IMR-90 (cell line): ENCODE measurements at regions of chr11 and their contacts with region 1.

Region 1: DNA sequence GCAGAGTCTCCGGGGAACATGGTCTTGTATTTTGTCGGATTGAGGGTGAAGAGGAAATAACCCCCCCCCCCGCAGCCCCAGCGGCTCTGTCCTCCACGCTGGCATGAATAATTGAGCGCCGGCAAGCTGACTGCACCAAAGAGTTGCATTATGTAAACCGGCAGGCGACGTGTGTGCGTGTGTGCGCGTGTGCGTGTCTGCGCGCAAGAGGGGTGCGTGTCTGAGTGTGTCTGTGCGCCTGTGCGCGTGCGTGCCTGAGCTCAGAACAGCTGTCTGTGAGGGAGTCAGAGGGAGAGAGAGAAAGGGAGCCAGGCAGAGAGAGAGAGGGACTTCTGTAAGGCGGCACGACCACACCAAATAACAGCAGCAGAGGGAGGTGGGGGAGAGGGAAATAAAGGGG is 94.4 kb downstream of the SCN3B start:
- DNase-seq: peak; percentile 88
- ATAC-seq: peak; percentile 88
- H3K4me3 ChIP-seq: peak overlapping the region; percentile 31
- H3K27ac ChIP-seq: peak overlapping the region; percentile 50
- H3K4me1 ChIP-seq: peaks cover 13% of the 10 kb centered on the region
- H3K27me3 ChIP-seq: no peaks in the 10 kb centered on the region
- CTCF ChIP-seq: no peak
- POLR2A ChIP-seq: no peak
- RAD21 ChIP-seq: no peak

Region 2: DNA sequence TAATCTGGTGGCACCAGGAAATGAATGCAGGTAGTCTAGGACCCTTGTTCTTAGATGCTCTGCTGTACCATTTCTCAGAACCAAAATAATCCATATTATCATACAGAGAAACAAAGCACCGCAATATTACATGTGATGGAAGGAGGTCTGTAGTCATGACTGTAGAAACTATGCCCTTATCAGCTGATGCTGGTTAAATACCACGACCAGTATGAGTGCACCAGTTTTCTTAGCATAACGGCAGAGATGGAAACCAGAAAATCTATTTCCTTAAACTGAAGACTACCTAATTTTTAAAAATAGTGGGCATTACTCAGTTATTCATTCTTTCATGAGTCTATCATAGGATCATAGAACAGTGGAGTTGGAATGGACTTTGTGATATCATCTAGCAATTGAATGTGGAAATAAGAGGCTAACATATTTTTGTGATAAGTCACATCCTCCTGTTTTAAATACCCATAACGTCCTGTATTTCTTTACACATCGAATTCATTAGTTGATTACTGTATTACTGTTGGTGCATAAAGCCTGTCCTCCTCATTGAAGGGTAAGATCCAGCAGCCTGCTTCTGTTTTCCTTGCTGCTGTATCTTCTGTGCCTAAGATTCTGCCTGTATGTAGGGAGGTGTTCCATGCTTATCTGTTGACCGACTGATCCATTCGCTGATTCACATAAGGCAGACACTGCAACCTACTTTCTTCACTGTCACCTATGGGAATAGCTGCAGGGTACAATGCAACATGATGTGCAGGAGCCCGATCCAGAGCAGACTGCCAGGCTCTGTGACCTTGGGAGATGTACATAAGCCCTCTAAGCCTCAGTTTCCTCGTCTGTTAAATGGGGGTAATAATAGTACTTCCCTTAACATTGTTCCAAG is 662.2 kb before region 1 on chr11:
- CTCF ChIA-PET with region 1: no interaction called
- POLR2A ChIA-PET with region 1: interaction called, 13 read pairs
- dilution Hi-C with region 1: no loop called
- in situ Hi-C with region 1: no loop called
- intact Hi-C with region 1: no loop called
- DNase-seq: peak; percentile 68
- ATAC-seq: peak; percentile 37
- H3K4me3 ChIP-seq: no peak overlapping the region
- H3K27ac ChIP-seq: peak overlapping the region; percentile 50; the same call in 1 of the 2 replicates
- H3K4me1 ChIP-seq: peaks cover 3% of the 10 kb centered on the region; the same call in 1 of the 2 replicates
- H3K27me3 ChIP-seq: no peaks in the 10 kb centered on the region
- CTCF ChIP-seq: no peak
- POLR2A ChIP-seq: no peak
- RAD21 ChIP-seq: no peak

Region 3: GRCh38 chr11:123159183-123159857 is 400.7 kb before region 1 on chr11:
- CTCF ChIA-PET with region 1: no interaction called
- POLR2A ChIA-PET with region 1: no interaction called
- dilution Hi-C with region 1: no loop called
- in situ Hi-C with region 1: no loop called
- intact Hi-C with region 1: no loop called
- DNase-seq: peak; percentile 47
- ATAC-seq: no peak
- H3K4me3 ChIP-seq: no peak overlapping the region
- H3K27ac ChIP-seq: peak overlapping the region; percentile 62; the same call in 1 of the 2 replicates
- H3K4me1 ChIP-seq: peaks cover 18% of the 10 kb centered on the region
- H3K27me3 ChIP-seq: no peaks in the 10 kb centered on the region
- CTCF ChIP-seq: no peak
- POLR2A ChIP-seq: no peak
- RAD21 ChIP-seq: no peak

Region 4: DNA sequence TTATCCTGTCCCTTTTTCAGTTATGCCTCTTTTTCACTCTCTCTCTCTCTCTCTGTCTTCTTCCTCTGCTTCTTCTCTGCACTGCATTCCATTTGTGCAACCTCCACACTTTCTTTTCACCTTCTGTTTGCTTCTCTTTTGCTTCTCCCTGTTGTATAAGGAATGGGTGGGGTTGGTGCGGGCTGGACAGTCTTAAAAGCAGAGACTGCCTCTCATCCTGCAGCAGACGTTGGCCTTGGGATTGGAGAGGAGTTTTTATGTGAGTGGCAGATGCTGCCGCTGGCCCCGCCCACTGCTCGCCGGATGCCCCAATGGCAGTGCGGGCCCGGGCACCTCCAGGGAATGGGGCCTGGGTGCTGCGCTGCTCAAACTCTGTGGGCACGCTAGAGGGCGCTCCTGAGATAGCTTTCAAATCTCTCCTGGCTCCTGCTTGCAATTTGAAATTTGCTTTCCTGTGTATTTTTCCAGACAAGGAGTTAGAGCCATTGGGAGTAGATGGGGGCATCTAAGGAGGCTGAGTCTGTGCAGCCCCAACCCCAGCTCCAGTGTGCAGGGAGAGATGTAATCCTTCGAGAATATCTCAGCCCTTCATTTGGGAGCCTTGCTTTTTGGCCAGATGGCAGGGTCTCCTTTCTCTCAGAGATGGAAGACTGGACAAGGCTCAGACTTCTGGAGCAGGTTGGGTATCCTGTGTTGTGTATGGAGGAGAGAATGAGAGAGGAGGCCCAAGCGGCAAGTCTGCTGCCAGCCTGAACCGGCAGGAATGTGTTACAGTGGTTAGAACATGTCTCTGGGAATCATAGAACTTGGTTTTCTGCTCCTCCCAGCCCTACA is 48.8 kb before region 1 on chr11:
- CTCF ChIA-PET with region 1: interaction called, 6 read pairs
- POLR2A ChIA-PET with region 1: no interaction called
- dilution Hi-C with region 1: no loop called
- in situ Hi-C with region 1: loop called (anchors 5 kb)
- intact Hi-C with region 1: loop called (anchors 1 kb)
- DNase-seq: peak; percentile 88
- ATAC-seq: peak; percentile 98
- H3K4me3 ChIP-seq: no peak overlapping the region
- H3K27ac ChIP-seq: no peak overlapping the region
- H3K4me1 ChIP-seq: peaks cover 6% of the 10 kb centered on the region; the same call in 1 of the 2 replicates
- H3K27me3 ChIP-seq: no peaks in the 10 kb centered on the region
- CTCF ChIP-seq: peak; percentile 96
- POLR2A ChIP-seq: no peak; the same call in 1 of the 2 replicates
- RAD21 ChIP-seq: peak; percentile 85

Region 5: DNA sequence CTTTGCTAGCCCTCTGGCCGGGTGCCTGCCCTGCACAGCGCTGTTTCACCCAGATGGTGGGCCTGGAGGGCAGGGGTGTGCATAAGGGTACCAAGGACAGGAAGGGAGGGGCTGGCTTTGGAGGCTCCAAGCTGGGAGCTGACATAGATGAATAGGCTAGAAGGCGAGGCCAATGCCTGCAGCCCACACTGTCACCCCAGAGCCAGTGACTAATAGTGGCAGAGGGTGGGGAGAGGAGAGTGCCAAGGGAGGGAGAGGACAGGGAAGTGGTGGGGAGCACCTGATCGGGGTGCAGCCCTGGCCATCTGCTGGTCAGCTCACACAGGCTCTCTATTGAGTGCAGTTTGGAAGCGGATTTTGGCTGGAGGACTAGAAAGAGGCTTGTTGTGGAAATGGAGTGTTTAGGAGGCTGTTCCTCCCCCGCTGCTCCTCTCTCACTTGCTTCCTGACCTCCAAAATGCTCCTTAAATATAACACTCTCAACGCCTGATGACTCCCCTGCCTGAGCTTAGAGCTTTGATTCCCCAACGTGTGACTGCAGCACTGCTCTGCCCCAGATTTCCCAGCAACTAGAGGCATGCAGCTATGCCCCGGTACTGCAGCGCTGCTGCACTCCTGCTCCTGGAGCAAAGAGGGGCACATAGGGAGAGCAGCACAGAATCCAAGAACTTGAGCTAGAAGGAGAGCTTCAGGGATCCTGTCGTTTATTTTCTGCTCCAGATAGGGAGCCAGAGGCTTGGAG is 40.8 kb before region 1 on chr11:
- CTCF ChIA-PET with region 1: no interaction called
- POLR2A ChIA-PET with region 1: interaction called, 13 read pairs
- dilution Hi-C with region 1: no loop called
- in situ Hi-C with region 1: loop called (anchors 5 kb)
- intact Hi-C with region 1: no loop called
- DNase-seq: peak; percentile 27
- ATAC-seq: peak; percentile 66
- H3K4me3 ChIP-seq: no peak overlapping the region
- H3K27ac ChIP-seq: no peak overlapping the region
- H3K4me1 ChIP-seq: peaks cover 8% of the 10 kb centered on the region
- H3K27me3 ChIP-seq: no peaks in the 10 kb centered on the region
- CTCF ChIP-seq: no peak
- POLR2A ChIP-seq: no peak
- RAD21 ChIP-seq: no peak

Region 6: GRCh38 chr11:123628936-123629683 is 69.1 kb after region 1 on chr11:
- CTCF ChIA-PET with region 1: no interaction called
- POLR2A ChIA-PET with region 1: no interaction called
- dilution Hi-C with region 1: no loop called
- in situ Hi-C with region 1: no loop called
- intact Hi-C with region 1: no loop called
- DNase-seq: peak; percentile 84
- ATAC-seq: peak; percentile 82
- H3K4me3 ChIP-seq: no peak overlapping the region
- H3K27ac ChIP-seq: no peak overlapping the region
- H3K4me1 ChIP-seq: no peaks in the 10 kb centered on the region
- H3K27me3 ChIP-seq: peaks cover 12% of the 10 kb centered on the region
- CTCF ChIP-seq: no peak
- POLR2A ChIP-seq: no peak
- RAD21 ChIP-seq: no peak

Region 7: GRCh38 chr11:123771664-123772063 is 211.7 kb after region 1 on chr11:
- CTCF ChIA-PET with region 1: no interaction called
- POLR2A ChIA-PET with region 1: no interaction called
- dilution Hi-C with region 1: no loop called
- in situ Hi-C with region 1: no loop called
- intact Hi-C with region 1: no loop called
- DNase-seq: no peak
- ATAC-seq: no peak
- H3K4me3 ChIP-seq: no peak overlapping the region
- H3K27ac ChIP-seq: no peak overlapping the region
- H3K4me1 ChIP-seq: no peaks in the 10 kb centered on the region
- H3K27me3 ChIP-seq: no peaks in the 10 kb centered on the region
- CTCF ChIP-seq: no peak
- POLR2A ChIP-seq: no peak
- RAD21 ChIP-seq: no peak